B cell (primary cell): ENCODE measurements at regions of chr7 and their contacts with region 1.

Region 1: DNA sequence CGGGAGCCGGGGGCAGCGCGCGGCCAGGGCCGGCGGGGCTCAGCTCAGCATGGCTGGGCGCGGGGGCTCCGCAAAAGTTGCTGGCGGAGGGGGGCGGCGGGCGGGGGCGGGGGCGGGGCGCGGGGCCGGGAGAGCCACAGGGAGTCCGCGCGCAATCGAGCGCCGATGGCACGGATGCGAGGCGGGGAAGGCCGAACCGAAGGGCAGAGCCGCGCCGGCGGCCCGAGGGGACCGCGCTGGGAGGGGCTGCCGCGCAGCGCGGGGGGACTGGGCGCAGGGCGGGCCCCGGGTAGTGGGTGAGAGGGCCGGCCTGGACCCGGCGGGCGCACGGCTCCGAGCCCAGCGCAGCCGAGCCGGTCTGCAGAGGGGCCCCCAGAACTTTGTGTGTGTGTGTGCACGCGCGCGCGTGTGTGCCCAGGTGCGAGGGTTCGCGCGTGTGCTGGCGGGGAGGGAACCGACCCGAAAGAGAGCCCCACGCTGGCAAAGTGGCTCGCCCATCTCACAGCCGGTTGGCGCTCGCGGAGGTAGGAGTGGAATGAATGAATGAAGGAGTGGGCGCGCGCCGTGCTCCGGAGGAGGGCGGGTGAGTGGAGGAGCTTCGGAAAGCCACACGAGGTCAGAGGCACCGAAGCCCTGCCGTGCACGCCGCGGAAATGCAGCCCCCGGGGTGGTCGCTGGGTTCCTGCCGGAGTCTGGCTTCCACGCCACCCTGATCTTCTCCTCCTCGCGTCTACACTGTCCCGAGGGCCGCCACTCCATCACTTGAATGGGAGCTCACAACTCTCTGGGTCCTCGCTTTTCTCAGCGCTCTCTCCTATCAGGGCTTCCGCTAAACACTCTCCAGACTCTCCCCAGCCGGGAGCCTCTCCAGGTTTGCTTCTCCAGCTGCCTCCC is at the start of gene HIPK2:
- DNase-seq: peak; percentile 82
- ATAC-seq: peak; percentile 78
- H3K4me3 ChIP-seq: peak within 1 kb of the TSS; percentile 71 to 97 (median 78)
- H3K4me3 Mint-ChIP-seq: peak within 1 kb of the TSS; percentile 98
- H3K27ac ChIP-seq: peak within 1 kb of the TSS; percentile 66 to 81
- H3K27ac Mint-ChIP-seq: peak within 1 kb of the TSS; percentile 95
- H3K4me1 ChIP-seq: peaks cover 11 to 23% of the 10 kb centered on the region in 2 donors
- H3K4me1 Mint-ChIP-seq: peaks cover 35% of the 10 kb centered on the region
- H3K27me3 ChIP-seq: peaks cover 0 to 5% (median 1%) of the 10 kb centered on the region in 4 experiments
- H3K27me3 Mint-ChIP-seq: peaks cover 16% of the 10 kb centered on the region
- CTCF ChIP-seq: no peak
- total RNA-seq, gene HIPK2: 58.2 and 60.5 TPM in 2 replicates

Region 2: DNA sequence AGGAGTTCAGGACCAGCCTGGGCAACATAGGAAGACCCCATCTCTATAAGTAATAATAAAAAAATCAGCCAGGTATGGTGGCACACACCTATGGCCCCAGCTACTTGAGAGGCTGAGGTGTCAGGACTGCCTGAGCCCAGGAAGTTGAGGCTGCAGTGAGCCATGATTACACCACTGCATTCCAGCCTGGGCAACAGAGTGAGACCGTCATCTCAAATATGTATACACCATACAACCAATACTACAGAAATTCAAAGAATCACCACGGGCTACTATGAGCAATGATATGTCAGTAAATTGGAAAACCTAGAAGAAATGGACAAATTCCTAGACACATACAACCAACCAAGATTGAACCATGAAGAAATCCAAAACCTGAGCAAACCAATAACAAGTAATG is 608.4 kb before region 1 on chr7:
- CTCF ChIA-PET with region 1: no interaction called
- POLR2A ChIA-PET with region 1: no interaction called
- intact Hi-C with region 1: no loop called
- DNase-seq: no peak
- ATAC-seq: no peak
- H3K4me3 ChIP-seq: no peak overlapping the region
- H3K4me3 Mint-ChIP-seq: no peak overlapping the region
- H3K27ac ChIP-seq: no peak overlapping the region
- H3K27ac Mint-ChIP-seq: no peak overlapping the region
- H3K4me1 ChIP-seq: no peaks in the 10 kb centered on the region
- H3K4me1 Mint-ChIP-seq: no peaks in the 10 kb centered on the region
- H3K27me3 ChIP-seq: no peaks in the 10 kb centered on the region
- H3K27me3 Mint-ChIP-seq: no peaks in the 10 kb centered on the region
- CTCF ChIP-seq: no peak

Region 3: DNA sequence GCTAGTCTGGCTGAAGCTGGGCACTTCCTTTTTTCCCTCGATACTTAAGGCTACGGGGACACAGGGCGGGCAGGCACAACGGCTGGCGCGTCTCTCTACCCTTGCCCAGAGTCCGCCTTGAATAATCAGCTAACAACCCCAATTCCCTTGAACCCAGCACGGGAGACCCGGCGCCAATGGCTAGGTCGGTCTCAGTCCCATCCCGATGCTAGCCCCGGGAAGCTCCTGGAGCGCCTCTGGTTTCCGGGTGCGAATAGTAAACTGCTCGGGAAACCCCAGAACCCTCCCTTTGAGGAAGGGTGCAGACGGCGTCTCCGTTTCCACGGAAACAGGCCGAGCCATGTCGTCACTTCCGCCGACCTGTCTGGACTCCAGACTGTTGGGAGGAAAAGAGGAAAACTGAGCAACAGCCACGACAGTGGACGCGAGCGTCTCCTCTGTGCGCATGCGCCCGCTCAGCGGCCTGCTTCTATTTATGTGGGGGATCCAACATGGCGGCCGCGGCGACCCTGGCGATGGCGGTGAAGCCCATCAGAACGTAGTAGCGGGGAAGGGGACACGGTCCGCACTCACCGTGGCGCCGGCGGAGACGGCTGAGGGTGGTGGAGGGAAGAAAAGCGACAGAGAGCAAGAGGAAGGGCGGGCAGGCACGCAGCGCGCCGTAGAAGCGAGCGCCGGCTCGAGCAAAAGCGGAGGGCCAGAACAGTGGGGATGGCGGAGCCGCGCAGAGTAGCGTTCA is 547.3 kb before region 1 on chr7 and contains the start of gene UBN2:
- CTCF ChIA-PET with region 1: no interaction called
- POLR2A ChIA-PET with region 1: no interaction called
- intact Hi-C with region 1: loop called (anchors 10 kb)
- DNase-seq: peak; percentile 95
- ATAC-seq: peak; percentile 80
- H3K4me3 ChIP-seq: peak within 1 kb of the TSS; percentile 77 to 96 (median 90)
- H3K4me3 Mint-ChIP-seq: peak within 1 kb of the TSS; percentile 96
- H3K27ac ChIP-seq: peak within 1 kb of the TSS; percentile 60 to 90
- H3K27ac Mint-ChIP-seq: peak within 1 kb of the TSS; percentile 95
- H3K4me1 ChIP-seq: peaks cover 12 to 14% of the 10 kb centered on the region in 2 donors
- H3K4me1 Mint-ChIP-seq: peaks cover 25% of the 10 kb centered on the region
- H3K27me3 ChIP-seq: peaks cover 0 to 3% (median 0%) of the 10 kb centered on the region in 4 experiments
- H3K27me3 Mint-ChIP-seq: peaks cover 7% of the 10 kb centered on the region
- CTCF ChIP-seq: no peak
- total RNA-seq, gene UBN2: 33.4 and 36.1 TPM in 2 replicates

Region 4: DNA sequence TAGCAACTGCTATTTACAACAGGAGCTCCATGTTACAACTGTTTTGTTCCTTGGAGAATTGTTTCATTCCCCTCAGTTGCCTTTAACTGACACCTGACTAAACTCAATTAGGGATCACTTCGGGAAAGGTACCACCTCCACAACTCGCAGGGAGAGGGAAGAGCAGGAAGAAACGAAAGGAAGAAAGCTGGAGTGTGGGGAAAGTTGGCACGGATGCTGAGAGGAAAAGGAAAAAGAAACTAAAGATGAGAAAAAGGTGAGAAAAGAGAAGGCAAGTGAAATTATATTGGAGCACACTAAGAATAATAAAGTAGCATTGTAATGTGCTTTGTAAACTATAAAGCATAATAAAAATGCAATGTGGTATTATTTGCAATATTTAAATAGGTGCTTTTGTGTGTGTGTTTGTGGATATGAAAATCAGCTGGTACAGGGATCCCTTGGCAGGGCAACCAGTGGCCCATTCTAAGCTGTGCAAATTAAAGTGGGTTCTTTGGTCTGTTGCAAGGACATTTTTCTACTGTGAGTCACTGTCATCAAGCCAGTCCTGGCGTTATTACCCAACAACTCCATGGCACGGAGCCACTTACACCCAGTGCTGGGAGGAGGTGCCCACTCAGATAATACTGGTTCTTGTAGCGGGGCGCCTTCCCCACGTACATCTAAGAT is 46.3 kb before region 1 on chr7:
- CTCF ChIA-PET with region 1: no interaction called
- POLR2A ChIA-PET with region 1: interaction called, 5 read pairs
- intact Hi-C with region 1: loop called (anchors 5 kb)
- DNase-seq: no peak
- ATAC-seq: no peak
- H3K4me3 ChIP-seq: no peak overlapping the region
- H3K4me3 Mint-ChIP-seq: peak overlapping the region; percentile 47
- H3K27ac ChIP-seq: peak overlapping the region; percentile 32 to 58
- H3K27ac Mint-ChIP-seq: peak overlapping the region; percentile 70
- H3K4me1 ChIP-seq: peaks cover 19 to 25% of the 10 kb centered on the region in 2 donors
- H3K4me1 Mint-ChIP-seq: peaks cover 56% of the 10 kb centered on the region
- H3K27me3 ChIP-seq: no peaks in the 10 kb centered on the region
- H3K27me3 Mint-ChIP-seq: no peaks in the 10 kb centered on the region
- CTCF ChIP-seq: no peak

Region 5: GRCh38 chr7:139915864-139916716 is 137.9 kb after region 1 on chr7:
- CTCF ChIA-PET with region 1: interaction called, 4 read pairs
- POLR2A ChIA-PET with region 1: interaction called, 6 read pairs
- intact Hi-C with region 1: loop called (anchors 2 kb)
- DNase-seq: peak; percentile 36
- ATAC-seq: peak; percentile 84
- H3K4me3 ChIP-seq: peak overlapping the region in 2 of 5 experiments; percentile 13 to 46
- H3K4me3 Mint-ChIP-seq: peak overlapping the region; percentile 77
- H3K27ac ChIP-seq: peak overlapping the region; percentile 38 to 70
- H3K27ac Mint-ChIP-seq: peak overlapping the region; percentile 79
- H3K4me1 ChIP-seq: peaks cover 22% of the 10 kb centered on the region in 2 donors
- H3K4me1 Mint-ChIP-seq: peaks cover 25% of the 10 kb centered on the region
- H3K27me3 ChIP-seq: no peaks in the 10 kb centered on the region
- H3K27me3 Mint-ChIP-seq: no peaks in the 10 kb centered on the region
- CTCF ChIP-seq: no peak

Region 6: DNA sequence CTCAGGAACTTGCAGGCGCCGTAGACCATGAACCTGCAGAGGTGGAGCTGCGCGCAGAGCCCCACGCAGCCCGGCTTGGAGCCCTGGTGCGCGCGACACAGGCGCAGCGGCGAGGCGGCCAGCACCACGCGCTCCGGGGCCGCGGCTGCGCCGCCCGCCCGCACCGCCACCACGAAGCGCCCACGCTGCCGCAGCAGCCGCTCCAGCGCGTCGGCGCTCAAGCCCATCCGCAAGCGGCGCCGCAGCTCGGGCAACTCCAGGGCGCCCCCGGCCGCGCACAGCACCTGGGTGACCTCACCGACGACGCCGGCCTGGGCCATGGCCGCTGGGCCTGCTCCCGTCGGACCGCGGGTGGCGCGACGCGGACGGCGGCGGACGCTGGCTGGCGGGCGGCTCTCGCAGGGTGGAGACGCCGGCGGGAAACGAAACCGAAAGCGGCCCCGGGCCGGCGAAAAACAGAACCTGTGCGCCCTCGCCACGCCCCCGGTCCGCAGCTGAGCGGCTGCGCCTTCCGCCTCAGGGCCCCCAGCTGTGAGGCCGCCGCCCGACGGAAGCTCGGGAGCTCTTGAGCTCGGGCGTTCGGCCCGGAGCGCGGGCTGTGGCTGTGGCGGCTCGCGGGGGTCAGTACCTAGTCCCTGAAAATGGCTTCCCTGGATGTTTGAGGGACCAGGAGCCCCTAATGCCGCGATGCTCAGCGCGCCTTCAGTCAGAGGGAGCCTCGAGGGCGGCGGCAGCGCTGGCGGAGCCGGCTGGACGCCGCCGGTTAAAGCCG is 284.5 kb after region 1 on chr7 and contains the start of gene PARP12:
- CTCF ChIA-PET with region 1: no interaction called
- POLR2A ChIA-PET with region 1: no interaction called
- intact Hi-C with region 1: loop called (anchors 1 kb)
- DNase-seq: peak; percentile 96
- ATAC-seq: peak; percentile 86
- H3K4me3 ChIP-seq: peak within 1 kb of the TSS; percentile 67 to 89 (median 84)
- H3K4me3 Mint-ChIP-seq: peak within 1 kb of the TSS; percentile 98
- H3K27ac ChIP-seq: peak within 1 kb of the TSS; percentile 86 to 93
- H3K27ac Mint-ChIP-seq: peak within 1 kb of the TSS; percentile 99
- H3K4me1 ChIP-seq: peaks cover 32 to 38% of the 10 kb centered on the region in 2 donors
- H3K4me1 Mint-ChIP-seq: peaks cover 43% of the 10 kb centered on the region
- H3K27me3 ChIP-seq: no peaks in the 10 kb centered on the region
- H3K27me3 Mint-ChIP-seq: no peaks in the 10 kb centered on the region
- CTCF ChIP-seq: no peak
- total RNA-seq, gene PARP12: 160 and 177 TPM in 2 replicates